Heart right ventricle (tissue), 16 donors: ENCODE measurements at regions of chr19 and their contacts with region 1.

Region 1: DNA sequence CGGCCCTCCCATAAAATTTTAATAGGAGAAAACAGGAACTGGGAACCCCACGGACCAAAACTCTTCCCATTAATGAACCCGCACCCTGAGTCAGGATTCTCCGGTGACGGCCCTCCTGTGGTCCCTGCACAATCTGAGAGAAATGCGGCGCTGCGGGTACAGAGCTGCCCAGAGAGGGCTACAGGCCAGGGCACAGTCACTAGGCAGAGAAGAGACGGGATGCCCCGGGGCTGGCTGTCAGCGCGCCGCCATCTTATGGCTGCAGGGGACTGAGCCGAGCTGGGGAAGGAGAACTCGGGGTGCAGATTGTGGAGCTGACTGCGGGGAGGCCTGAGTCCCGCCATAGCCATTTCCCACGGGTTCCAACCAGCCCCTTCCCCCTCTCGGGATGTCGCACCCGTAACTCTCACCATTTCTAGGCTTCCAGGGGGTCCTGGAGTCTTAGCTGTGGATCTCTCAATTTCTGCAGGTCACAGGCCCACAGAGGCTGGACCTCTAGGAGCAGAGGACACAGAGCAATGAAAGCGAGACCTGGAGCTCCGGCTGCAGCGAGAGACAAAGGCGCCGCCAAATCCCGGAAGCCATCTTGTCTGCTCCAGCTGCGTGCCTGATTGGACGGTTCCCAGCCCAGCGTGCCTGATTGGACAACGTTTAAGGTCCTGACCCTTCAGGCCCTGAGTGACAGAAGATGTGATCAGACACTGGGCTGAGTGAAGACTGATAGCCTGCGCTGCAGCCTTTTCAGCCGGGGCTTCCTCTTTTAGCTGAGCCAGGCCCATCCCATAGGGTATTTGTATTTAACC is at the start of gene ZNF675:
- DNase-seq: peak; percentile 93 to 95
- ATAC-seq: peak; percentile 96 to 99 (median 98)
- H3K4me3 ChIP-seq: peak within 1 kb of the TSS; percentile 58 to 88 (median 82)
- H3K27ac ChIP-seq: peak within 1 kb of the TSS; percentile 32 to 87 (median 81)
- H3K4me1 ChIP-seq: peaks cover 0 to 16% (median 10%) of the 10 kb centered on the region in 9 donors
- H3K27me3 ChIP-seq: no peaks in the 10 kb centered on the region
- CTCF ChIP-seq: peak in 1 of 9 donors; percentile 30
- total RNA-seq, gene ZNF675: 2.4 to 5.7 (median 3.3) TPM

Region 2: DNA sequence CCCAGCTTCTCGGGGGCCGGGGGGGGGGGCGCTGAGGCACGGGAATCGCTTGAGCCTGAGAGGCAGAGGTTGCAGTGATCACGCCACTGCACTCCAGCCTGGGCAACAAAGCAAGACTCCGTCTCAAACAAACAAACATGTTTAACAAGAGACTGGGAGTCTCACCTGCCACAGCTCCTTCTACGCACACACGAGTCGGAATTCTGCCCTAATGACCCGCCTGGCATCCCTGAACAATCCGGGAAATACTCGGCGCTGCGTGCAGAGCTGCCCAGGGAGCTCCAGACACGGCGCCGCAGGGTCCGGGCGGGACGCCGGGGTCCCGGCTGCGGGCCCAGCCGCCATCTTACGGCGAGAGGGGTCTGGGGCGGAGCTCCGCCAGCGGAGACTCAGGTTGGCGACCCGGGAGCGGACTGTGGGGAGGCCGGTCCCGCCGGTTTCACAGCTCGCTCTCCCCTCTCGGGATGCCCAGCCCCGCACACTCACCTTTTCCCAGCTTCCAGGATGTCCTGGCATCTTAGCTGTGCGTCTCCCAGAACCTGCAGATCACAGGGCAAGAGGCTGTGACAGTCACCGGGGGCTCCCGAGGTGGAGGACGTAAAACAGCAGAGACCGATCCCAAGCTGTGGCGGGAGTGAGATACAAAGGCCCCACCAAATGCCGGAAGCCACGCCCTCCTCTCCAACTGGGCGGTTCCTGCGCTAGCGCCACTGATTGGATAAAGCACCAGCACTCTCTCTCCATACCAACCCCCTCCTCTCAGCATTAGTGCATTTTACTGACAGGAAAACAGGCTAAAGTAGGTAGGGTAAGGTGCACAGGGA is 413.0 kb before region 1 on chr19:
- intact Hi-C with region 1: loop called in 1 of 10 experiments (anchors 5 kb)
- DNase-seq: peak; percentile 91 to 92
- ATAC-seq: peak; percentile 99 to 100 (median 100)
- H3K4me3 ChIP-seq: peak overlapping the region; percentile 69 to 100 (median 95)
- H3K27ac ChIP-seq: peak overlapping the region in 9 of 10 donors; percentile 69 to 89 (median 84)
- H3K4me1 ChIP-seq: peaks cover 0 to 18% (median 11%) of the 10 kb centered on the region in 9 donors
- H3K27me3 ChIP-seq: no peaks in the 10 kb centered on the region
- CTCF ChIP-seq: peak in 3 of 9 donors; percentile 6 to 34 (median 19)

Region 3: DNA sequence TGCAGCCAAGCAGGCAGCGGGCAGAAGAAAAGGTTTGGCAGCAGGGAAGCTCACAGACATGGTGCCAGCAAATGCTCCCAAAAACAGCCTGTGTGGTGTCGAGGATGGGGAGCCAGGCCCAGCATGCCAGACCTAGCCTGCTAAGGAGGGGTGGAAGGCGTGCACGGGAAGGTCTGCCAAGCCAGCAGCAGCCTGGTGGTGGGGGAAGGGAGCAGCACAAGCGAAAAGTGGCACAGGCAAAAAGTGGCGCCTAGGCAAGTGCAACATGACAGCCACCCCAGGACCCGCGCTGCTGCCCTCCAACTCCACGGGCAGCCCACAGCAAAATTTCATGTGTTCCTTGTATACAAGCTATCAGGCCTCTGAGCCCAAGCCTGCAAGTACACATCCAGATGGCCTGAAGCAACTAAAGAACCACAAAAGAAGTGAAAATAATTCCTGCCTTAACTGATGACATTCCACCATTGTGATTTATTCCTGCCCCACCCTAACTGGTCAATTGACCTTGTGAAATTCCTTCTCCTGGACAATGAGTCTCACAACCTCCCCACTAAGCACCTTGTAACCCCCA is 137.6 kb before region 1 on chr19:
- intact Hi-C with region 1: no loop called
- DNase-seq: peak; percentile 42 to 63
- ATAC-seq: peak; percentile 71 to 99 (median 88)
- H3K4me3 ChIP-seq: no peak overlapping the region
- H3K27ac ChIP-seq: no peak overlapping the region
- H3K4me1 ChIP-seq: no peaks in the 10 kb centered on the region
- H3K27me3 ChIP-seq: no peaks in the 10 kb centered on the region
- CTCF ChIP-seq: no peak

Region 4: DNA sequence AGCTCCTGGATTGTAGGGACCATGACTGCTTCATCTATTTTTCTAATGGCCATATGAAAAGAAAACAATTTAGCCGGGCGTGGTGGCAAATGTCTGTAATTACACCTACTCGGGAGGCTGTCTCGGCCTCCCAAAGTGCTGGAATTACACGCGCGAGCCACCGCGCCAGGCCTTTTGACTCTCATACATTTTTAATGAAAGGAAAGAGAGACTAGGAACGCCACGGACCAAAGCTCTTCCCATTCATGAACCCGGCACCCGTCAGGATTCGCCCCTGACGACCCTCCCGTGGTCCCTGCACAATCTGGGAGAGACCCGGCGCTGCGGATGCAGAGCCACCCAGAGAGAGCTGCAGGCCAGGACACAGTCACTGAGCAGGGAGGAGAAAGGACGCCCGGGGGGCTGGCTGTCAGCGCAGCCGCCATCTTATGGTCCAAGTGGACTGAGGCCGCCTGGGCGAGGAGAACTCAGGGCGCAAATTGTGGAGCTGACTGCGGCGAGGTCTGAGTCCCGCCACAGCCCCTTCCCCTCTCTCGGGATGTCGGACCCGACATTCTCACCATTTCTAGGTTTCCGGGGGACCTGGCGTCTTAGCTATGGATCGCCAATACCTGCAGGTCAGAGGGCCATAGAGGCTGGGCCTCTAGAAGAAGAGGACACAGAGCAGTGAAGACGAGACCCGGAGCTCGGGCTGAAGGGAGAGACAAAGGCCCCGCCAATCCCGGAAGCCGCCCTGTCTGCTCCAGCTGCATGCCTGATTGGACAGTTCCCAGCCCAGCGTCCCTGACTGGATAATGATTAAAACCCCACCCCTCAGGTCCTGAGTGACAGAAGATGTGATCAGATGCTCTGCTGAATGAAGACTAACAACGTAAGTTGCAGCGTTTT is 71.6 kb after region 1 on chr19 and contains the start of gene ZNF681:
- intact Hi-C with region 1: loop called in 5 of 10 experiments (anchors 2 to 10 kb)
- DNase-seq: peak; percentile 84 to 93
- ATAC-seq: peak; percentile 93 to 97 (median 96)
- H3K4me3 ChIP-seq: peak within 1 kb of the TSS; percentile 52 to 85 (median 74)
- H3K27ac ChIP-seq: peak within 1 kb of the TSS in 9 of 10 donors; percentile 42 to 89 (median 74)
- H3K4me1 ChIP-seq: peaks cover 0 to 21% (median 11%) of the 10 kb centered on the region in 9 donors
- H3K27me3 ChIP-seq: no peaks in the 10 kb centered on the region
- CTCF ChIP-seq: peak in 3 of 9 donors; percentile 6 to 12 (median 9)
- total RNA-seq, gene ZNF681: 0.37 to 0.89 (median 0.59) TPM